ENCODE measurements at regions of chr12 and their contacts with region 1.

Region 1: DNA sequence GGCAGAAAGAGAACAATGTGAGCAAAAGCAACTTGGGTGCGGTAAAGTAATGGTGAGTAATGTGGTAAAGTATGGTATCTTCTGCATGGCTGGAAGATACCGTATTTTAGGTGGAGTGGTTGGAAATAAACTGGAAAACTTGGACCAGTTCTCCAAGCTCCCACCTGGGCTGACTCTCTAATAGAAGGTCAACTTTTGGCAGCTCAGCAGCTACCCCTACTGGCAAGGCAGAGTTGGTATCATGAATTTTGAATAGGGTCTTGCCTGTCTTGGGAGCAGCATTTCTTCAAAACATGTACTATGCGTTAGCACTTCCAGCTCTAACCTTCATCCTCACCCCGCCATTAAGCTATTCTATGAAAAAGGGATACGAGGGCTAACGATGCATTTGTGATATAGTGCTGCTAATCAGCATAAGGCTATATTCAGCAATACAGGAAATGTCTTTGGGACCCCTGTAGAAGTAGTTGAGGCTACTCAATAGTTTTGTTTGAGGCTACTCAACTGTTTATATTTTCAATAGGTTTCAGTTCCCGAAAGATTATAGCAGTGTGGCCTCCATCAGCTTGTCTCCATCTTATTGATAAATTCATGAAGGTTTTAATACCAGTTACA is 276.3 kb upstream of the FAR2 start:
- DNase-seq: peak; percentile 67
- ATAC-seq: peak; percentile 70; the same call in 1 of the 2 replicates
- H3K4me3 ChIP-seq: no peak overlapping the region
- H3K27ac ChIP-seq: no peak overlapping the region
- H3K4me1 ChIP-seq: peaks cover 2% of the 10 kb centered on the region; the same call in 1 of the 2 replicates
- H3K27me3 ChIP-seq: no peaks in the 10 kb centered on the region; the same call in 1 of the 2 replicates
- CTCF ChIP-seq: peak; percentile 71
- POLR2A ChIP-seq: no peak
- RAD21 ChIP-seq: peak; percentile 81

Region 2: DNA sequence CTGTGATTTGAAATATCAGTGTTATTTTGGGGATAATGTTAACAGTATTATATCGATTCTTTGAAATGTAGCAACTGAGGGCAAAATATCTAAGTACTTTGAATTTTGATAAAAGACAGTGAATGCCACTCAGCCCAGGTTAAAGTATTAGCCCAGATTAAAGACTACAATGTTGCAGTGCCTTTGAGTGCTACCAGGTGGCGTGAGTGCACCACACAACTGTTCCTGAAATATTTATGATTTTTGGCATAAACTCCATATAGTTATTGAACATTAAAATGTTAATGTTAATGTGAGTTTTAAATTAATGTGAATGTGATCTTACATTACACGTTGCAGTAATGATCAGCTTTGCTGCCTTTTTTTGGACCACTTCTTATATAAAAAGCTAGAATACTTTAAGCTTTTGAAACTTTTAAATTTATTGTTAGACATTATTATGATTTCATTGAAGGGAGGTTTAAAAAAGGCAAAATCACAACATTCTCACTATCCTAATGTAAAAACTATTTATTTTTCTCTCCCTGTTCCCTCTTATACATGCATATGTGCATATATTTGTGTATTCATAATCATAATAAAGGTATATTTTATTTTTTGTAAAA is 1139.6 kb before region 1 on chr12:
- CTCF ChIA-PET with region 1: interaction called, 4 read pairs
- POLR2A ChIA-PET with region 1: no interaction called
- dilution Hi-C with region 1: no loop called
- in situ Hi-C with region 1: loop called (anchors 10 kb)
- intact Hi-C with region 1: loop called (anchors 1 kb)
- DNase-seq: peak; percentile 52
- ATAC-seq: peak; percentile 84
- H3K4me3 ChIP-seq: no peak overlapping the region
- H3K27ac ChIP-seq: no peak overlapping the region
- H3K4me1 ChIP-seq: no peaks in the 10 kb centered on the region
- H3K27me3 ChIP-seq: no peaks in the 10 kb centered on the region
- CTCF ChIP-seq: peak; percentile 95
- POLR2A ChIP-seq: peak; percentile 49; the same call in 1 of the 2 replicates
- RAD21 ChIP-seq: peak; percentile 96

Region 3: DNA sequence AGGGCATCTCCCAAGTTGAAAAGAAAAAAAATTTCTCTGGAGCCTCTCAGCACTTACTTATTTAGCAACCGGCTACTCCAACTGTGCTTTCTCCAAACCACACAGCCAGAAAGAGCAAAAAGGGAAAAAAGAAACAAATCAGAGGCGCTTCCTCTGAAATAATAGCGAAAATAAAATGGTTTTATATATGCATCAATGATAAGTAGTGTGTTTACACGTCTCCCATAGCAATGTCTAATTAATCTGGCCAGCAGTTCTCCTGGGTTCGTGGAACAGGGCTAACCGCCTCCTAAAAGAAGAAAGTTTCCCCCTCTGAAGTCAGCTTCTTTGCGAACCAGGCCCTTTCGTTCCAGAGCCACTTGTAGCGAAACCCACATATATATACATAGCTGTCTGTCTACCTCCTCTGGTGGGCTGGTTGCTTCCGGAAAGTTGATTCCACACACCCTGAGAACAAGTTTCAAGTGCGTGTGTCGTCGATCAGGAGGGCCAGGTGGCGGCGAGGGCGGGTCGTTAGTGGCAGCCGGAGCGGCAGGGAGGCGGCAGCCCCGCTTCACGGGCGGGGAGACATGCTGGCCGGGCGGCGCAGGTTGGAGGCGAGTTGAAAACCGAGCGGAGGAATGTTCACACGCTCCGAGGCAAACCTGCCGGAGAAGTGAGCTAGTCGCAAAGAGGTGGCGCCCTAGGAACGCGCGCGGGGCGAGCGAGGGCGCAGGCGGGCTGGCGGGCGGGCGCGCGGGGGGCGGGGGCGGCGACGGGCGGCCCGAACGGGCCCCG is 902.9 kb before region 1 on chr12:
- CTCF ChIA-PET with region 1: no interaction called
- POLR2A ChIA-PET with region 1: no interaction called
- dilution Hi-C with region 1: no loop called
- in situ Hi-C with region 1: no loop called
- intact Hi-C with region 1: loop called (anchors 5 kb)
- DNase-seq: peak; percentile 53
- ATAC-seq: peak; percentile 49
- H3K4me3 ChIP-seq: peak overlapping the region; percentile 54
- H3K27ac ChIP-seq: peak overlapping the region; percentile 39; the same call in 1 of the 2 replicates
- H3K4me1 ChIP-seq: peaks cover 2% of the 10 kb centered on the region
- H3K27me3 ChIP-seq: peaks cover under 1% of the 10 kb centered on the region; the same call in 1 of the 2 replicates
- CTCF ChIP-seq: peak; percentile 34
- POLR2A ChIP-seq: peak; percentile 66
- RAD21 ChIP-seq: peak; percentile 44

Region 4: DNA sequence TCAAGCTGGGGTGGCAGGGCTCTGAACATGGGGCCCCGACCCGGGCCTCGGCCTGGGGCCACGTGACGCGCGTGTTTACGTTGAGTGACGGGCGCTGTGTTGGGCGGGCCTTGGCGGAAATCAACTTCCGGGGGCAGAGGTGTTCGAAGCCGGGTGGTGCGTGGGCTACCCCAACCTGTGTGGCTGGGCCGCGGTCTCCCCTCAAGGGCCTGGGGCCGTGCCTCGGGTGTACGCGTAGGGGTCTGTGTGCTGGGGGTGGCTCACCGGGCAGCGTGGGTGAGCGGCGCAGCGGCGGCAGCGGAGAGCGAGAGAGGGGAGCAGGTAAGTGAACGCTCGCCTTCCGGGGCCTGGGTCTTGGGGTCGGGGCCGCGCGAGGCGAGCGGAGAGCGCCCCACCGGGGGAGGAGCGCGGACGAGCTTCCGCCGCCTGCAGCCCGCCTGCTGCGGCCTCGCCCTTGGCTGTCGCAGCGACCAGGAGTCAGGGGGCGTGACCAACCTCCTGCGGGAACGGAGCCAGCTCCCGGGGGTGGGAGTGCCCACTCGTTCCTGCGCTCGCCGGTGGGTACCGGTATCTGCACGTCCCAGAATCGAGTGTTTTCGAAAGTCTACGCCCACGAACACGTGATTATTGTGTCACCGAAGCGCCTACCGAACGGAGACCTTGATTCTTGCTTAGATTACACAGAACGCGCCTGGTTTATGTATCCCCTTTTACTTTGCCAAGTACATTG is 682.3 kb before region 1 on chr12 and contains the start of gene CCDC91:
- CTCF ChIA-PET with region 1: no interaction called
- POLR2A ChIA-PET with region 1: no interaction called
- dilution Hi-C with region 1: no loop called
- in situ Hi-C with region 1: no loop called
- intact Hi-C with region 1: loop called (anchors 5 kb)
- DNase-seq: peak; percentile 77
- ATAC-seq: peak; percentile 89
- H3K4me3 ChIP-seq: peak within 1 kb of the TSS; percentile 81
- H3K27ac ChIP-seq: peak within 1 kb of the TSS; percentile 93
- H3K4me1 ChIP-seq: peaks cover 5% of the 10 kb centered on the region
- H3K27me3 ChIP-seq: no peaks in the 10 kb centered on the region
- CTCF ChIP-seq: no peak
- POLR2A ChIP-seq: peak; percentile 70
- RAD21 ChIP-seq: no peak
- total RNA-seq, gene CCDC91: 14.7 and 17.5 TPM in 2 replicates

Region 5: DNA sequence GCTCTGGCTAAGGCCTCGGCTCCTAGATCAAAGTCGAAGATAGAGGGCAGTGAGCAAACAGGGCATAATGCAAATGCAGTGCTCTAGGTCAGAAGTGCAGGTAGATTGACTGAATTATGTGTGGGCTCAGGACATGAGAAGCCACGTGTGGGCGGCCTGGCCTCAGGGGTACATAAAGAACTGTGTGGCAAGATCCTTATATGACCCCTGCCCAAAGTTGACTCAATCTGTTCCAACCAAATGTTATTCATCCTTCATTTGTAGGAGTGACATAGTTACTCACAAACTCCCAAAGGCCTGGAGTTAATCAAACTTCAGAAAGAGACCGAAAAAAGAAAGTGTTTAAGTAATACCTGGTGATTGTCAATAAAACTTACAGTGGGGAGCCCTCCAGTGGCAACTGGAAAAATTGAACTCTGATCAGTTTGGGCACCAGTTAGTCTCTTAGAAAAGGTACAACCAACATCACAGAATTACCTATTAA is 125.9 kb after region 1 on chr12:
- CTCF ChIA-PET with region 1: interaction called, 3 read pairs
- POLR2A ChIA-PET with region 1: no interaction called
- dilution Hi-C with region 1: no loop called
- in situ Hi-C with region 1: no loop called
- intact Hi-C with region 1: loop called (anchors 5 kb)
- DNase-seq: peak; percentile 56
- ATAC-seq: peak; percentile 88
- H3K4me3 ChIP-seq: no peak overlapping the region
- H3K27ac ChIP-seq: no peak overlapping the region
- H3K4me1 ChIP-seq: no peaks in the 10 kb centered on the region
- H3K27me3 ChIP-seq: no peaks in the 10 kb centered on the region
- CTCF ChIP-seq: peak; percentile 61
- POLR2A ChIP-seq: no peak
- RAD21 ChIP-seq: peak; percentile 64

Region 6: GRCh38 chr12:29609431-29610215 is 736.9 kb after region 1 on chr12:
- CTCF ChIA-PET with region 1: no interaction called
- POLR2A ChIA-PET with region 1: no interaction called
- dilution Hi-C with region 1: no loop called
- in situ Hi-C with region 1: no loop called
- intact Hi-C with region 1: no loop called
- DNase-seq: no peak
- ATAC-seq: no peak; the same call in 1 of the 2 replicates
- H3K4me3 ChIP-seq: no peak overlapping the region
- H3K27ac ChIP-seq: no peak overlapping the region
- H3K4me1 ChIP-seq: peaks cover 14% of the 10 kb centered on the region
- H3K27me3 ChIP-seq: no peaks in the 10 kb centered on the region
- CTCF ChIP-seq: no peak
- POLR2A ChIP-seq: no peak
- RAD21 ChIP-seq: no peak